Right ventricle myocardium inferior (tissue), 1 donor: ENCODE measurements at regions of chr10 and their contacts with region 1.

Region 1: DNA sequence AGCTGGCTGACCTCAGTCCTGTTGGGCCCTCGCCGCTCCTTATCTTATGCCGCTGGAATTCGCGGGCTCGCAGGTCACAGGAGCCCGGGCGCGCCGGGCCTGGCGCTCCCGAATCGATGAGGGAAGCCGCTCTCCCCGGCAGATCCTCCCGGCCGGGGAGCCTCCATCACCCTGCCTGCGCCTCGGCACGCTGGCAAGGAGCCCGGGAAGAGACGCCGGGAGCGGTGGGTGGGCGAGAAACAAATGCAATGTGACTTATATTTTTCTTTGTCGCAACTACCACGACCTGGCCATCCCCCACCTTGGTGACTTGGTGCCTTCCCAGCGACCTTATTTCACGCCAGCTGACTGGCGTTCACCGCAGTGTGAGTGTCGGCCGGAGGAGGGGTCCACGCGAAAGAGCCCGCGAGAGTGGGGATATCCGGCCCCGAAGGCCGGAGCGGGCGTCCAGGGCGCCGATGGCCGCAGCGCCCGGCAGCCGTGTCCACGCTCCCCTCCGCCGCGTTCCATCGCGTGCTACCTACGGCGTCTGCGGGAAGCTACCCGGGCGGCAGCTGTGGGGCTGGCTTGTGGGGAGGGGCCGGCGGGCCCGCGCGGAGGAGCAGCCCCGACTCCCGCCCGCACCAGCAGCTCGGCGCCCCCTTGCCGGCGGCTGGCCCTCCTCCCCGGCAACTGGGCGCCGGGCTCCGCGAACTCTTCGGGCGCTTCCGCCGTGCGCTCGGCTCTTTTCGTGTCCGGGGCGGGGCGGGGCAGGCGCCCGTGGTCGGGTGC is 494 bp upstream of the BMPR1A start:
- DNase-seq: peak; percentile 87
- ATAC-seq: peak; percentile 91

Region 2: GRCh38 chr10:86569335-86569734 is 186.6 kb before region 1 on chr10:
- intact Hi-C with region 1: no loop called
- DNase-seq: no peak
- ATAC-seq: no peak

Region 3: GRCh38 chr10:86710987-86711512 is 44.9 kb before region 1 on chr10:
- intact Hi-C with region 1: loop called (anchors 5 kb)
- DNase-seq: peak; percentile 92
- ATAC-seq: peak; percentile 84

Region 4: GRCh38 chr10:86798611-86799010 is 42.7 kb after region 1 on chr10:
- intact Hi-C with region 1: loop called (anchors 5 kb)
- DNase-seq: no peak
- ATAC-seq: no peak

Region 5: DNA sequence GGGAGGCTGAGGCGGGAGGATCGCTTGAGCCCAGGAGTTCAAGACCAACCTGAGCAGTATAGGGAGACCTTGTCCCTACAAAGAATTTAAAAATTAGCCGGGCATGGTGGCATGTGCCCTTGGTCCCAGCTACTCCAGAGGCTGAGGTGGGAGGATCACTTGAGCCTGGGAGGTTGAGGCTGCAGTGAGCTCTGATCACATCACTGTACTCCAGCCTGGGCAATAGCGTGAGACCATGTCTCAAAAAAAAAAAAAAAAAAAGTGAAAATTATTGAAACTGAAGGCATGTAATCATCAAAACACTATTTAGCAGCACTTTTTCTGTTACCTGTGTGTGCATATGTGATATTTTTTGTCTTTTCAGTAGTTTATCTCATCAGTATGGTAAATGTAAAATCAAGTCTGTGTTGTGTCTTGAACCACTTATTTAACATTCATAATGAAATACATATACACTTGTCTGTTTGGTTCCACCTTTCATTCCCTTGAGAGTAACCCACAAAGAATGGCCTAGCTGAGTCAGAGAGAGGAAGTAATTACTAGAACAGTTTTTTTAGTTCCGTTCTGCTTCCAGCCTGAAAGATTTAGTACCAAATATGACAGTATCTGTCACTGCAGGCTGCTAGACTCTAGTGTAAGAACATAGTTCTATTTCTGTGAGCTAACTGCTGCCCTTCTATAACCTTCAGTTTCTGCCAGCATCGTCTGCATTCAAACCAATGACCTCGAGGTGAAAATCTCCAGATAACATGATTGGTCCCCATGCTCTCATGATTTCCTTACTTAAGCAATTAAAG is 132.9 kb after region 1 on chr10:
- intact Hi-C with region 1: loop called (anchors 5 kb)
- DNase-seq: no peak
- ATAC-seq: peak; percentile 76